ENCODE measurements at regions of chr15 and their contacts with region 1.

Region 1: DNA sequence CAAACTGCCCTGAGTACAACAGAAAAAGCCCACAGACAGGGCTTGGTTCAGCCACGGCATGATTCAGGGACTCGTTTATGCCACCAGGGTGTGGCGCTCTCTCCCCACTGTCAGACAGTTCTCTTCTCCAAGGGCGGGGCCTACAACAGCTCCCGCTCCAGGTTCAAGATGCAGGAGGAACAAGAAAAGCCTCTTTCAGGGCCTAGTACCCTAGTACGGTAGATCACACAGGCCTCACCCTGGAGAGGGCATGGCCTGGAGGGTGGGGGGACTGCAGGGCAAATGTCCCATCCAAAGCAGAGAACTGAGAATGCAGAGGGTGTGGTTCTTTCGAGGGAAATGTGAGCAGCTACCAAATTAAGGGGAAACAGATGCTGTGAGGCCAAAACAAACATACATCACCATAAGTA is 12.0 kb downstream of the MESD start:
- DNase-seq: peak in 6 of 9 experiments; percentile 28 to 59 (median 40)
- ATAC-seq: peak; percentile 46
- H3K4me3 ChIP-seq: no peak overlapping the region
- H3K4me3 Mint-ChIP-seq: no peak overlapping the region
- H3K27ac ChIP-seq: no peak overlapping the region
- H3K27ac Mint-ChIP-seq: peak overlapping the region; percentile 14
- H3K4me1 ChIP-seq: no peaks in the 10 kb centered on the region
- H3K4me1 Mint-ChIP-seq: peaks cover 43% of the 10 kb centered on the region
- H3K27me3 ChIP-seq: no peaks in the 10 kb centered on the region
- H3K27me3 Mint-ChIP-seq: no peaks in the 10 kb centered on the region
- CTCF ChIP-seq: peak; percentile 17

Region 2: GRCh38 chr15:80436511-80437307 is 540.9 kb before region 1 on chr15:
- CTCF ChIA-PET with region 1: no interaction called
- POLR2A ChIA-PET with region 1: no interaction called
- intact Hi-C with region 1: no loop called
- DNase-seq: no peak
- ATAC-seq: no peak
- H3K4me3 ChIP-seq: no peak overlapping the region
- H3K4me3 Mint-ChIP-seq: no peak overlapping the region
- H3K27ac ChIP-seq: no peak overlapping the region
- H3K27ac Mint-ChIP-seq: no peak overlapping the region
- H3K4me1 ChIP-seq: no peaks in the 10 kb centered on the region
- H3K4me1 Mint-ChIP-seq: no peaks in the 10 kb centered on the region
- H3K27me3 ChIP-seq: no peaks in the 10 kb centered on the region
- H3K27me3 Mint-ChIP-seq: peaks cover 14% of the 10 kb centered on the region
- CTCF ChIP-seq: no peak

Region 3: GRCh38 chr15:80942746-80943555 is 34.7 kb before region 1 on chr15:
- CTCF ChIA-PET with region 1: no interaction called
- POLR2A ChIA-PET with region 1: no interaction called
- intact Hi-C with region 1: no loop called
- DNase-seq: no peak
- ATAC-seq: no peak
- H3K4me3 ChIP-seq: no peak overlapping the region
- H3K4me3 Mint-ChIP-seq: no peak overlapping the region
- H3K27ac ChIP-seq: no peak overlapping the region
- H3K27ac Mint-ChIP-seq: no peak overlapping the region
- H3K4me1 ChIP-seq: no peaks in the 10 kb centered on the region
- H3K4me1 Mint-ChIP-seq: no peaks in the 10 kb centered on the region
- H3K27me3 ChIP-seq: no peaks in the 10 kb centered on the region
- H3K27me3 Mint-ChIP-seq: no peaks in the 10 kb centered on the region
- CTCF ChIP-seq: no peak

Region 4: DNA sequence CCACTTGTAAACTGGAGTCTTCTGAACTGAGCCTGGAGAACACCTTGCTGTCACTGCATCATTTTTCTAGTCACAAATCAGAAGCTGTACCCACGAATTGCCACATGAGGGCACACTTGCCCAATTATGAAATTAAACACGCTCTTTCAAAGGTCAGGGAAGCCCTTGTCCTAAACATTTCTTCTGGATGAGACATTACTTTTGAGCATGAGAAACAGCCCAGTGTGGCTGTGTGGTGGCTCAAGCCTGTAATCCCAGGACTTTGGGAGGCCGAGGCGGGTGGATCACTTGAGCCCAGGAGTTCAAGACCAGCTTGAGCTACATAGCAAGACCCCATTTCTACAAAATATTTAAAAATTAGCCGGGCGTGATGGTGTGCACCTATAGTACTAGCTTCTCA is 128.9 kb after region 1 on chr15:
- CTCF ChIA-PET with region 1: interaction called, 11 read pairs
- POLR2A ChIA-PET with region 1: no interaction called
- intact Hi-C with region 1: loop called (anchors 1 to 5 kb)
- DNase-seq: peak in 5 of 9 experiments; percentile 32 to 67 (median 45)
- ATAC-seq: no peak
- H3K4me3 ChIP-seq: no peak overlapping the region
- H3K4me3 Mint-ChIP-seq: no peak overlapping the region
- H3K27ac ChIP-seq: no peak overlapping the region
- H3K27ac Mint-ChIP-seq: no peak overlapping the region
- H3K4me1 ChIP-seq: no peaks in the 10 kb centered on the region
- H3K4me1 Mint-ChIP-seq: no peaks in the 10 kb centered on the region
- H3K27me3 ChIP-seq: no peaks in the 10 kb centered on the region
- H3K27me3 Mint-ChIP-seq: peaks cover 23% of the 10 kb centered on the region
- CTCF ChIP-seq: peak; percentile 69

Measured in CD8-positive, alpha-beta T cell (primary cell).